ENCODE measurements at regions of chr3 and their contacts with region 1.

Region 1: GRCh38 chr3:170344971-170345370 is 12.5 kb upstream of the SKIL start:
- DNase-seq: no peak
- ATAC-seq: no peak
- H3K4me3 ChIP-seq: no peak overlapping the region
- H3K27ac ChIP-seq: no peak overlapping the region
- H3K4me1 ChIP-seq: peaks cover 0 to 9% (median 0%) of the 10 kb centered on the region in 12 donors
- H3K27me3 ChIP-seq: no peaks in the 10 kb centered on the region
- CTCF ChIP-seq: no peak
- POLR2A ChIP-seq: no peak

Region 2: GRCh38 chr3:169879845-169880575 is 465.0 kb before region 1 on chr3:
- intact Hi-C with region 1: no loop called
- DNase-seq: no peak
- ATAC-seq: peak in 3 of 4 donors; percentile 13 to 36 (median 32)
- H3K4me3 ChIP-seq: no peak overlapping the region
- H3K27ac ChIP-seq: no peak overlapping the region
- H3K4me1 ChIP-seq: peaks cover 0 to 7% (median 0%) of the 10 kb centered on the region in 12 donors
- H3K27me3 ChIP-seq: no peaks in the 10 kb centered on the region
- CTCF ChIP-seq: no peak
- POLR2A ChIP-seq: no peak

Region 3: GRCh38 chr3:170296703-170297102 is 48.3 kb before region 1 on chr3:
- intact Hi-C with region 1: no loop called
- DNase-seq: no peak
- ATAC-seq: no peak
- H3K4me3 ChIP-seq: no peak overlapping the region
- H3K27ac ChIP-seq: no peak overlapping the region
- H3K4me1 ChIP-seq: peaks cover 0 to 6% (median 0%) of the 10 kb centered on the region in 12 donors
- H3K27me3 ChIP-seq: no peaks in the 10 kb centered on the region
- CTCF ChIP-seq: no peak
- POLR2A ChIP-seq: no peak

Region 4: GRCh38 chr3:170331143-170331542 is 13.8 kb before region 1 on chr3:
- intact Hi-C with region 1: loop called in 1 of 10 experiments (anchors 1 kb)
- DNase-seq: peak in 1 of 5 donors; percentile 15
- ATAC-seq: peak in 3 of 4 donors; percentile 33 to 80 (median 45)
- H3K4me3 ChIP-seq: no peak overlapping the region
- H3K27ac ChIP-seq: no peak overlapping the region
- H3K4me1 ChIP-seq: peaks cover 0 to 4% (median 0%) of the 10 kb centered on the region in 12 donors
- H3K27me3 ChIP-seq: no peaks in the 10 kb centered on the region
- CTCF ChIP-seq: no peak
- POLR2A ChIP-seq: no peak